HEK293 (cell line): ENCODE measurements at regions of chr5 and their contacts with region 1.

Region 1: DNA sequence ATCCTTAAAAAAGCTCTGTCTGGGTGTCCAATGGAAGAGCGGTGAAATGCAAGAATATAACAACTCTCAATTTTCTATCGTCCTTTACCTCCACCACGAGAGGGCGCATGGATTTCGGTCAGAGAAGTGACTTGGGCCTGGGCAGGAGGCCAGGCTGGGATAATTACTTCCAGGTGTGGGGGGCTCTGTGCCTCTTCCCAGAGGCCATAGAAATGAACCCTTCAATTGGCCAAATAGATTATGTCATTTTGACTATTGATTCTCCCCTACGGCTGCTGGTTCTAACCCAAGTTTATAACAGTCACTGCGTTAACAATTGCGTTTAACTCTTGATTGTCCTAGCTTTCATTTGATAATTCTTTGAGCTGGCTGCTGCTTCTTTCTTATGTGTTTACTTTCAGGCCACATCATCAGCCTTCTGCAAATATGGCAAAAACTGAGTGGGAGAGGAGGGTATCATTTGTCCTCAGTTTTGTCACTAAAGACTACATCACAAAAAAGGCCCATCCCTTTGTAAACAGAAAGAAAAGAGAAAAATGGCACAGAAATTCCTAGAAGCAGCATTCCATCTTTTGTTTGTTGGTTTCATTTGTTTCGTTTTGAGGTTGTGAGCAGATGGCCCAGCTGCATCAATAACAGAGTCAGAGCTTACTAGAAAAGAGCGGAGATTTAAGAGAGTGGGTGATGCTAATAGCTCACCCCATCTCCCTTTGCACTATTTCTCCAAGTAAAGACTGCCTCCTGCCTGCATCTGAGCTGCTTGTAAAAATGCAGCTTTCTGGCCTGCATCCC is 45.4 kb upstream of the ZFR start:
- H3K4me3 ChIP-seq: no peak overlapping the region
- H3K27ac ChIP-seq: no peak overlapping the region
- H3K4me1 ChIP-seq: peaks cover 6% of the 10 kb centered on the region; the same call in 1 of the 2 replicates
- CTCF ChIP-seq: peak; percentile 73

Region 2: DNA sequence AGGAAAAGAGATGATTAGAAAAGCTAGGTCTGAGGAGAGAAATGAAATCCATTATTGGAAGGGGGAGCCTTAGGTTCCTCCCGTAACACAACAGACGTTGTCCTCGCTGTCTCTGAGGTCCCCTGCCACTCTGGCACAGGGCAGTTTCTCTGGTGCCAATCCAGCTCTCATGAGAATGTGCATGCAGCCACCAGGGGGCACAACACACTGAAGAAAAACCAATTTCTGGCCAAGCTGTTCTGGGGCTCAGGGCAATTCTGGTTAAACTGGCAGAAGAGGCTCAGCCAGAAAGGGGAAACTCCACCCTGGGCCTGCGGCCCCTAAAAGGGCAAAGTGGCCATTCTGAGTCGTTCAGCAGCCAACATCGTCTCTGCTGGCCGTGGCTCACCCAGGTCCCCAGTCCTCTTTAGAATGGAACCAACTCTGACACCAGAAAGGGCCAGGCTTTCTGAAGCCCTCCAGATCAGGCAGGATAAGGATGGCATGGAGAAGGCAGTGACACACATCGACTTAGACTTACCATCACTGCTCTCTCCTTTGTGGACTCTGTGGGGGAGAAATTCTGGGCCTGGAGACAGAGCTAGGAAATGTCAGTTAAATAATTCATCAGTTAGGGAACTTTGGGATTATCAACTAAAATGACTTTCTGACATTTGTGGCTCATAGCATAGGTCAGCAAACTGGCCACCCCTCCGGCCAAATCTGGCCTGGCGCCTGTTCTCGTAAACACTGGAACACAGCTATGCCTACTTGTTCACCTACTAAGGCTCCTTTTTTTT is 257.4 kb before region 1 on chr5:
- CTCF ChIA-PET with region 1: interaction called, 16 read pairs
- POLR2A ChIA-PET with region 1: no interaction called
- H3K4me3 ChIP-seq: no peak overlapping the region
- H3K27ac ChIP-seq: no peak overlapping the region
- H3K4me1 ChIP-seq: no peaks in the 10 kb centered on the region
- CTCF ChIP-seq: peak; percentile 78; the same call in 1 of the 2 replicates

Region 3: GRCh38 chr5:32462618-32463017 is 27.4 kb before region 1 on chr5:
- CTCF ChIA-PET with region 1: interaction called, 15 read pairs
- POLR2A ChIA-PET with region 1: no interaction called
- H3K4me3 ChIP-seq: no peak overlapping the region
- H3K27ac ChIP-seq: no peak overlapping the region
- H3K4me1 ChIP-seq: no peaks in the 10 kb centered on the region; the same call in 1 of the 2 replicates
- CTCF ChIP-seq: no peak

Region 4: DNA sequence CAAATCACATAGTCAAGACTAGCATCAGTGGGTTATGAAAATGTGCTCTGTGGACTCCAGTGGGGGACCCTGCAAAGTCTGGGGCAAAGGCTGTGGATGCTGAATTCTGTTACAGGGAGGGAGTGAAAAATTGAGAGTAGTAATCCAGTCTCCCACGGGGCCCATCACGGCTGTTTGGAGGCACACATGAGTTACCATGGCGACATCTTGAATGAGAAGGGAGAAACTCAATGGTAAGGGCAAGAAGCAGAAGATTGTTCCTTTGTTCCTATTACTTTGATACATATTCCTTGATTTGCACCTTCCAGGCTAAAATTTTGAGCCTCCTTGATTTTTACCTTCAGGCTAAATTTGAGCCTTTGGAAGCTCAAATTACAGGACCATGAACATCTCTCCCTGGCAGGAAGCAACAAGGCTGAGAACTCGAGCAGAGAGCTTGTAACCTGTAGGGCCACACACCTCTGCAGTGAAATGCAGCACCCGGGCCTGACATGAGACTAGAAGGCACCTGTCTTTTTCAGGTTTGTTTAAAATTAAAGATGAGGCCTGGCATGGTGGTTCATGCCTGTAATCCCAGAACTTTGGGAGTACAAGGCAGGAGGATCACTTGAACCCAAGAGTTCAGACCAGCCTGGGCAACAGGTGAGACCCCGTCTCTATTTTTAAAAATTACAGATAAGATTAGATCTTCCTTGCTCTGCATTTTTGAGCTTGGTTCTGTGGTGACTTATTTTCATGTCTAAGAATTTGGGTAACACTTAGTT is 14.5 kb before region 1 on chr5:
- CTCF ChIA-PET with region 1: interaction called, 19 read pairs
- POLR2A ChIA-PET with region 1: no interaction called
- H3K4me3 ChIP-seq: no peak overlapping the region
- H3K27ac ChIP-seq: no peak overlapping the region
- H3K4me1 ChIP-seq: peaks cover 10% of the 10 kb centered on the region
- CTCF ChIP-seq: no peak

Region 5: DNA sequence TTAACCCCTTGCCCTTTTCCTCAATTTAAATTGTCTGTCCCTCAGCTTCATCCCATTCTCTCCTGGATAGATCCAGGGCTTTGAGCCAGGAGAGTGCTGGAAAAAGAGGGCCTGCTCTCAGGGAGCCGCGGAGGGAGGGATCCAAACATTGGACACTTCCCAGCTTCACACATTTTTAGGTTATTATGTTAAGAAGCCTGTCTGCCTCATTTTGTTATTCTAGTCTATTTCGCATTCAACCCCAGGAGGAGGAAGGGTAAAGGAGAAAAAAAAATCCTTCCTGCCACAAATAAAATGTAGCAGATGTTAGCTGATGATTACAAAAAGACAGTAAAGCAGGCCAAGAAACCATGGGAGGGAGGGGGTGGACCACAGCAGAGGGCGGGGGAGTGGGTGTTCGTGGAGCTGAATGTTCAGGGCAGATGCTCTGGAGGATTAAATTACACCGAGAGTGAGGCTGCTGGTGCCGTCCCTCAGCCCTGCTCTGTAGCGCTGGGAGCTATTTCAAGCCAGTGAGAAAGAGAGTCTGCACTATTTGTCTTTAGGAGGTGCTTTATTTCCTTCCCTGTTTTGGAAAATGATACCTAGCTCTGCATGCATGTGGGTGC is 15.1 kb after region 1 on chr5:
- CTCF ChIA-PET with region 1: interaction called, 27 read pairs
- POLR2A ChIA-PET with region 1: no interaction called
- H3K4me3 ChIP-seq: no peak overlapping the region
- H3K27ac ChIP-seq: no peak overlapping the region
- H3K4me1 ChIP-seq: peaks cover 12% of the 10 kb centered on the region
- CTCF ChIP-seq: no peak

Region 6: DNA sequence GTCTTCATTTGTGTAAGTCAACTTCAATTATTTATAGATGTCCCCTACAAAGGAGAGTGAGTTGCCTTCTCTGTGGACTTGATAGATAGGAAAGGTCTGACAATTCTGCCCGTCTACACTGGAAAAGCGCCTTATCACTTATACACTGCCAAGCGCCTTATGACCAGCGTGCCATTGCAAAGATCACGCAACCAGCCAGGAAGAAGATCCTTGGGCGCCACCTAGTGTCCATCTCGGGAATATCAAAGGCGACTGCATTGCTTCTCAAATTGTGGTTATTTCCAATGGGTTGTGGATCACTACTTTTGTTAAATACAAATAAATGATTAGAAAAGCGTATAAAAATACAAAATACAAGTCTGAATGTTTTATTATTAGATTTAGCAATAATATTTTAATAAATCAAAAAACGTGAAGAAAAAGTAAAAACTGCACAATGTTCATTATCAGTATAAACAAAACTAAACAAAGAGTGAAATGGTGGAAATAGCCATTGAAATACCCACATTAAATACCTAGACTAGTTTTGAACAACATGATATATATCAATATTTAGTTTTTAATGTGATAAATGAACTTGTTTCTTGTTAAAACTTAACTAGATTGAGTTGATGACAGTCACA is 123.2 kb after region 1 on chr5:
- CTCF ChIA-PET with region 1: interaction called, 46 read pairs
- POLR2A ChIA-PET with region 1: interaction called, 7 read pairs
- H3K4me3 ChIP-seq: no peak overlapping the region
- H3K27ac ChIP-seq: no peak overlapping the region
- H3K4me1 ChIP-seq: no peaks in the 10 kb centered on the region
- CTCF ChIP-seq: peak; percentile 85